IMR-90 (cell line): ENCODE measurements at regions of chr17 and their contacts with region 1.

Region 1: DNA sequence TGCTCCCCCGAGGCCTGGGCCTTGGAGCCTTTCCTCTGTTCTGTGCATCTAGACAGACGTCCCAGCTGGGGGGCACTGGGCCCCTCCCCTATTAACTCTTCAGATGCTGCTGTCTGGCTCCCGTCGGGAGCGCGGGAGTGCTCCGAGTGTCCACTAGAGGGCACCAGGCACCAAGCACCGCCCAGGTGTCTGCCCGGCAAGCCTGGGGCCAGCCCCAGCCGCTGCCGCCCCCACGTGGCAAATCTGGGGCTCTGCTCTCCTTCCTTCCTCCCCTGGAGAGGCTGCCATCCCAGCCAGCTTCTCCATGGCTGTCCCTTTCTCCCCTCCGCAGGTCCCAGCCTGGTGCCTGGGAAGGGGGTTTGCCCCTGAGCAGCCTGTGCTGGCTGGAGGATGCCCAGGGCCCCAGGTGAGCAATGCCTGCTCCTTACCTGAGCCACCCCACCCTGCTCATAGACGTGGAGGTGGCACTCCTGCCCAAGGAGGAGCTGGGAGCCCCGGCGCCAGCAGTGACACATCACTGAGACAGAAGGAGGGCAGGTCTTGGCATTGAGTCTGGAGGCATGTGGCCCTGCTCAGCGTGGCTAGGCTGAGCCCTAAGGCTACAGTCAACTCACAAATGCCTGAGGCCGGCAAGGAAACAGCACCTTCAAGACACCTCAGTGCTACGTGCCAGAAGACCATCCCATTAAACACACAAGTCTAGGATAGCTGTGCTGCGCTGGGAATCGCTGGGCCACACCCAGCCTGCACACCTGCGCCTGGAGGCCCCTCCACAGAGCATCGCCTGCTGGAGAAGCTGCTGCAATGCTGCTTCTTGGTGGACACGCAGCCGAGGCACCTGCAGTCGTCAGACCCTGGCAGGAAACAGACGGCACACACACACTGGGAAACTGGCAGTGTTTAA is 19.7 kb downstream of the TMEM235 start:
- DNase-seq: peak; percentile 76
- ATAC-seq: peak; percentile 91
- H3K4me3 ChIP-seq: no peak overlapping the region
- H3K27ac ChIP-seq: no peak overlapping the region
- H3K4me1 ChIP-seq: peaks cover 6% of the 10 kb centered on the region
- H3K27me3 ChIP-seq: peaks cover 3% of the 10 kb centered on the region; the same call in 1 of the 2 replicates
- CTCF ChIP-seq: peak; percentile 100
- POLR2A ChIP-seq: 0 out of 2 replicates have a peak, but pooled peaks have one; percentile 38
- RAD21 ChIP-seq: peak; percentile 98

Region 2: DNA sequence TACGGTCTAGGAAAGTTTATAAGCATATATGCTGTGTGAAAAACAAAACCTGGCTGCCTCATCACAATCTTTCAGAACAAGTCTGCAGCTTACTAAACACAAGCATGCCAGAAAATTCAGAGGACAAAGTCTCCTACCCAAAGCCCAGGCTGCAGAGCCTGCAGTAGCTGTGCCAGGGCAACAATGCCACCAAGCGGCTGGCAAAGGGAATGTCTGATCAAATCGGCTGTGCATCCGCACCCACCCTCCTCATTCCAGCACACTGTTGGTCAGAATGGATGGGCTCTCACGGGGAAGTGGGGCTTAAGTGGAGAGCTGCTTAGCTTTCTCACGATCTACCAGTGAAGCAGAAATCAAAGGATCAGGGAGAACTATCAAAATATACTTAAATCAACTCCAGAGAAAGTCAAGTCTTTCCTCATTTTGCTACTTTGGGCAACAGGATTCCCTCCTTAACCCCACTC is 457.4 kb after region 1 on chr17:
- CTCF ChIA-PET with region 1: interaction called, 5 read pairs
- POLR2A ChIA-PET with region 1: no interaction called
- dilution Hi-C with region 1: no loop called
- in situ Hi-C with region 1: no loop called
- intact Hi-C with region 1: loop called (anchors 10 kb)
- DNase-seq: peak; percentile 83
- ATAC-seq: peak; percentile 98
- H3K4me3 ChIP-seq: no peak overlapping the region
- H3K27ac ChIP-seq: no peak overlapping the region
- H3K4me1 ChIP-seq: peaks cover 4% of the 10 kb centered on the region; the same call in 1 of the 2 replicates
- H3K27me3 ChIP-seq: no peaks in the 10 kb centered on the region
- CTCF ChIP-seq: peak; percentile 93
- POLR2A ChIP-seq: no peak
- RAD21 ChIP-seq: peak; percentile 99